MCF 10A (cell line): ENCODE measurements at regions of chr3 and their contacts with region 1.

Region 1: DNA sequence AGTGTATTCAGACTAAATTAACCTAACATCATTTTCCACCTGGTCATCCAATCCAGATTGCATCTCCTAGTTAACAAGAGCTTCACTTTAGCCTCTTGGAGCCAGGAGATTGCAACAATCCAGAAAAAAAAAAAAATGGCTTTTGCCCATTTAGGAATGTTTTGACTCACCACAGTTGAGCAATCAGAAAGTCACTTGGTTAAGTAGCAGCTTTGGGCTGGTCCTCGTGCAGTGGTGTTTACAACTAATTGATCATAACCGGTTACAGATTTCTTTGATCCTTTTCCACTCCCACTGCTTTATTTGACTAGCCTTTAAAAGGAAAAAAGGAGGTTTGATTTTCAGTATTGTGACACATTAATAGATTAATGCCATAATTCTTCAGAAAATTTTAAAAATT is 688.8 kb upstream of the CCDC54 start:
- DNase-seq: peak; percentile 92
- H3K4me3 Mint-ChIP-seq: no peak overlapping the region
- H3K27ac Mint-ChIP-seq: peak overlapping the region; percentile 64
- H3K4me1 Mint-ChIP-seq: peaks cover 19% of the 10 kb centered on the region
- H3K27me3 Mint-ChIP-seq: no peaks in the 10 kb centered on the region
- CTCF ChIP-seq: no peak

Region 2: GRCh38 chr3:106728315-106729098 is 40.0 kb after region 1 on chr3:
- CTCF ChIA-PET with region 1: interaction called, 3 read pairs
- POLR2A ChIA-PET with region 1: interaction called, 7 read pairs
- intact Hi-C with region 1: loop called (anchors 2 kb)
- DNase-seq: peak; percentile 90
- H3K4me3 Mint-ChIP-seq: peak overlapping the region; percentile 55
- H3K27ac Mint-ChIP-seq: peak overlapping the region; percentile 97
- H3K4me1 Mint-ChIP-seq: peaks cover 32% of the 10 kb centered on the region
- H3K27me3 Mint-ChIP-seq: no peaks in the 10 kb centered on the region
- CTCF ChIP-seq: no peak

Region 3: GRCh38 chr3:106765342-106765741 is 76.9 kb after region 1 on chr3:
- CTCF ChIA-PET with region 1: no interaction called
- POLR2A ChIA-PET with region 1: interaction called, 3 read pairs
- intact Hi-C with region 1: loop called (anchors 1 kb)
- DNase-seq: peak; percentile 99
- H3K4me3 Mint-ChIP-seq: no peak overlapping the region
- H3K27ac Mint-ChIP-seq: peak overlapping the region; percentile 31
- H3K4me1 Mint-ChIP-seq: peaks cover 13% of the 10 kb centered on the region
- H3K27me3 Mint-ChIP-seq: no peaks in the 10 kb centered on the region
- CTCF ChIP-seq: no peak

Region 4: GRCh38 chr3:107315141-107315540 is 626.7 kb after region 1 on chr3:
- CTCF ChIA-PET with region 1: no interaction called
- POLR2A ChIA-PET with region 1: no interaction called
- intact Hi-C with region 1: no loop called
- DNase-seq: peak; percentile 39
- H3K4me3 Mint-ChIP-seq: no peak overlapping the region
- H3K27ac Mint-ChIP-seq: no peak overlapping the region
- H3K4me1 Mint-ChIP-seq: no peaks in the 10 kb centered on the region
- H3K27me3 Mint-ChIP-seq: no peaks in the 10 kb centered on the region
- CTCF ChIP-seq: no peak